A549 (cell line): ENCODE measurements at regions of chr3 and their contacts with region 1.

Region 1: DNA sequence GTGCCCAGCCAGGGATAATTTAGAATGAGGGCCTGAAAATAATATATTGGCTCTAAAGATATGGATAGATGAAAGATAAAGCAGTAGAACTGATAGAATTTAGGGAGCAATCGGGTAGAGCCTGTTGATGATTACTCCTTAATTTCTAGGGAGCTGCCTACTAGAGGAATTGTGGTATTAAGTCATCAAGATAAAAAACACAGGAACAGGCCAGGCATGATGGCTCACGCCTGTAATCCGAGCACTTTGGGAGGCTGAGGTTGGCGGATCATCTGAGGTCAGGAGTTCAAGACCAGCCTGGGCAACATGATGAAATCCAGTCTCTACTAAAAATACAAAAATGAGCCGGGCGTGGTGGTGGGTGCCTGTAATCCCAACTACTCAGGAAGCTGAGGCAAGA is 130.4 kb downstream of the PCCB start:
- DNase-seq: no peak
- ATAC-seq: no peak
- H3K4me3 ChIP-seq: no peak overlapping the region
- H3K27ac ChIP-seq: no peak overlapping the region
- H3K4me1 ChIP-seq: no peaks in the 10 kb centered on the region
- CTCF ChIP-seq: no peak
- EP300 ChIP-seq: no peak
- POLR2A ChIP-seq: no peak
- RAD21 ChIP-seq: no peak

Region 2: DNA sequence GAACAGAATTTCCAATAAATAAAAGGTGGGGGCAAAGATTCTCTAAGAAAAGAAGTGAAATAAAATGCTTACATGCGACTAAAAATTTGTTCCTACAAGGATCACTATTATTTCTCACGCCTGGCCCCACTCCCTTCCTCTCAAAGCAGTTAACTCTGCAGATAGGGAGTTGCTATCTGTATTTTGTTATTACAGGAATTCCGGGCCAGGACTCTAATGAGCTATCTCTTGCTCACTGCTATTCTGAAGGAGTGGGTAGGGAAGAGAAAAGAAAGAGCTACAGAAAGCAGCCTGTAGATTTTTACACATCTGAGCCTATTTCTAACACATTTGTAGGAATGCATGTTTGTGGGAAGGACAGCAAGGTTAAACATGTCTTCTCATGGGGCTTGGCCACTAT is 10.0 kb after region 1 on chr3:
- CTCF ChIA-PET with region 1: interaction called, 17 read pairs
- POLR2A ChIA-PET with region 1: no interaction called
- DNase-seq: no peak
- ATAC-seq: no peak
- H3K4me3 ChIP-seq: no peak overlapping the region
- H3K27ac ChIP-seq: no peak overlapping the region
- H3K4me1 ChIP-seq: no peaks in the 10 kb centered on the region
- CTCF ChIP-seq: no peak
- EP300 ChIP-seq: no peak
- POLR2A ChIP-seq: no peak
- RAD21 ChIP-seq: no peak